ENCODE measurements at regions of chrX and their contacts with region 1.

Region 1: DNA sequence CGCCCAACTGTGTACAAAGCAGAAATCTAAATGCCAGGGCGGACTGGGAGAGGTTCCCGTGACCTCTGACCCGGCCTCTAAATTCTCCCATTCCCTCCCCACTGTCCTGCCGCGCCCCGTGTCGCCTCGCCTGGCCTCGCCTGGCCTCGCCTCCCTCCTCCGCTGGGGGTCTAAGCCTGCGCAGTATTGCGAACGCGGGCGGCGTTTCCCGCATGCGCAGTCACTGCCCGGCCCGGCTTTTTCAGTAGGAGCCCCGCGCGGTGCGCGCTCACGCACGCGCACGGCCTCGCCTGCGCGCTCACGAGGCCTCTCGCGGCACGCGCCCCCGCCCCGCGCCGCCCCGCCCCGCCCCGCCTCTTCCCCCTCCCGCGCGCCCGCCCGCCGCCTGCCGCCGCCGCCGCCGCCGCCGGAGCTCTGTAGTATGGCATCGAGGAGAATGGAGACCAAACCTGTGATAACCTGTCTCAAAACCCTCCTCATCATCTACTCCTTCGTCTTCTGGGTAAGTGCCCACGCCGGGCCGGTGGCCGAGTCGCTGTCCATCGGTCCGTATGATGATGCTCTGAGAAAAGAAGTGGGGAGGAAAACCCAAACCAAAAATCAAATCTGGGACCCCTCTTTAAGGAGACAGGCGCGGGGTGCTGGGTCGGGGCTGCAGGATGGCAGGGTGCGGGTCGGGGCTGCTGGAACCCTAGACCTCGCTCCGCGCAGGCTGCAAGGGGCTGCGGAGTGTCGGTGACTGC is at the start of gene TSPAN7:
- DNase-seq: peak; percentile 53 to 63
- H3K4me3 ChIP-seq: peak within 1 kb of the TSS; percentile 47 to 69 (median 51)
- H3K27ac ChIP-seq: peak within 1 kb of the TSS; percentile 56 to 72
- H3K4me1 ChIP-seq: no peaks in the 10 kb centered on the region
- H3K27me3 ChIP-seq: peaks cover 0 to 51% of the 10 kb centered on the region in 2 donors
- CTCF ChIP-seq: no peak
- POLR2A ChIP-seq: no peak
- total RNA-seq, gene TSPAN7: 15.5 to 26.9 (median 25.9) TPM

Region 2: DNA sequence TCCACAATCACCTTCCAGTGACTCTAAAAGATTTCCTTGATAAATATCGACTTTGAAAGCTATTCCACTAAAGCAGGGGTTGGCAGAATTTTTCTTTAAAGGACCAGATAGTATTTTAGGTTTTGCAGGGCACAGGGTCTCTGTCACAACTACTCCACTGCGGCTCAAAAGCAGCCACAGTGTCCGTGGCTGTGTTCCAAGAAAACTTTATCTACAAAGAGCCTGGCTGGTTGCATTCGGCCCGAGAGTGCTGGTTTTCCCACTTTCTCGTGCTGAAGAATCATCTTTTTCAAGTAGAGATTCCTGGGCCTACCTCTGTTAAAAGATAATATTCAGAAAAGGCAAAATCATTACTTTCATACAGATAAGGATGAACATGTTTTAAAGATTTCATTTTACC is 55.6 kb after region 1 on chrX:
- intact Hi-C with region 1: loop called (anchors 2 kb)
- DNase-seq: no peak
- H3K4me3 ChIP-seq: no peak overlapping the region
- H3K27ac ChIP-seq: no peak overlapping the region
- H3K4me1 ChIP-seq: no peaks in the 10 kb centered on the region
- H3K27me3 ChIP-seq: peaks cover 0 to 64% of the 10 kb centered on the region in 2 donors
- CTCF ChIP-seq: no peak
- POLR2A ChIP-seq: no peak

Region 3: GRCh38 chrX:40244980-40245379 is 1683.7 kb after region 1 on chrX:
- intact Hi-C with region 1: loop called (anchors 5 kb)
- DNase-seq: no peak
- H3K4me3 ChIP-seq: peak overlapping the region in 1 of 3 donors; percentile 28
- H3K27ac ChIP-seq: no peak overlapping the region
- H3K4me1 ChIP-seq: no peaks in the 10 kb centered on the region
- H3K27me3 ChIP-seq: peaks cover 0 to 51% of the 10 kb centered on the region in 2 donors
- CTCF ChIP-seq: no peak
- POLR2A ChIP-seq: no peak

Measured in breast epithelium (tissue), 4 donors.